ENCODE measurements at regions of chr9 and their contacts with region 1.

Region 1: DNA sequence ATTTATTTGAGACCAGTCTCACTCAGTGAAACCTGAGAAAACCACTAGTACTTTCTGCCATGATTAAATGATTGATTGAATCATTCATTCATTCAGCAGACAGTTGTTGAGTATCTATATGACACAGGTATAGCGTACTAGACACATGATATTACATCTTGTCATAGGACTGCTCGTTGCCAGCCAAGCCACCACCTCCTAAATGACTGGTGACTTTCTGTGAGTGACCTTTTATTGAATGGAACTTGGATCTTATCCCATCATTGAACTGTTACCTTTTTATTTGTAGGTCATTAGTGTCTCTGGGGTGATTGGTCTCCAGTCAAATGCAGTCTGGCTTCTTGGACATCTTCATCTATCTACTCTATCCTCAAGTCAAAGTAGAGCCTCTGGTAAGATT is 80.7 kb downstream of the HACD4 start:
- DNase-seq: no peak
- ATAC-seq: no peak
- H3K4me3 ChIP-seq: no peak overlapping the region
- H3K4me3 Mint-ChIP-seq: no peak overlapping the region
- H3K27ac ChIP-seq: no peak overlapping the region
- H3K27ac Mint-ChIP-seq: no peak overlapping the region
- H3K4me1 ChIP-seq: no peaks in the 10 kb centered on the region
- H3K4me1 Mint-ChIP-seq: peaks cover 2% of the 10 kb centered on the region
- H3K27me3 ChIP-seq: no peaks in the 10 kb centered on the region
- H3K27me3 Mint-ChIP-seq: no peaks in the 10 kb centered on the region
- CTCF ChIP-seq: no peak

Region 2: DNA sequence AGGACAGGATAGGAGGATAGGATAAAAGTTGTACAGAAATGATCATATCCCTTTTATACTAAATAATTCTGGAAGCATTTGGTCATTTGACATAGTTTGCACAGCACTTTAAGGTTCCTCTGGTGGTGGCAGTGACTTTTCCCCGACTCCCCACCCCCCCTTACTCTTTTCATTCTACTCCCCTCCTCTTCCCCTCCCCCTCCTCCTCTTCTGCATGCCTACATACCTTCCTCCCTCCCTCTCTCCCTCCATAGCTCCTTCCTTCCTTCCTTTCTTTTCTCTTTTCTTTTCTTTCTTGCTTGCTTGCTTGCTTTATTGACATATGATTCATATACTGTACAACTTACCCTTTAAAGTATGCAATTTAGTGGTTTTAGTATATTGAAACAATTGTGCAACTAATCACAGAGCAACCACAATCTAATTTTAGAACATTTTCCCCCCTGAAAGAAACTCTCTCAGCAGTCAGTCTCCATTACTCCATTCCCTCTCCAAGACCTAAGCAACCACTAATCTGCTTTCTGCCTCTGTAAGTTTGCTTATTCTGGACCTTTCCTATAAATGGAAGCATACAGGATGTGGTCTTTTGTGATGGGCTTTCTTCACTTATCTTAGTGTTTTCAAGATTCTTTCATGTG is 78.2 kb before region 1 on chr9:
- CTCF ChIA-PET with region 1: no interaction called
- POLR2A ChIA-PET with region 1: no interaction called
- intact Hi-C with region 1: no loop called
- DNase-seq: no peak
- ATAC-seq: no peak
- H3K4me3 ChIP-seq: no peak overlapping the region
- H3K4me3 Mint-ChIP-seq: no peak overlapping the region
- H3K27ac ChIP-seq: no peak overlapping the region
- H3K27ac Mint-ChIP-seq: no peak overlapping the region
- H3K4me1 ChIP-seq: peaks cover 7 to 16% of the 10 kb centered on the region in 2 donors
- H3K4me1 Mint-ChIP-seq: peaks cover 14% of the 10 kb centered on the region
- H3K27me3 ChIP-seq: no peaks in the 10 kb centered on the region
- H3K27me3 Mint-ChIP-seq: no peaks in the 10 kb centered on the region
- CTCF ChIP-seq: no peak

Region 3: GRCh38 chr9:21016701-21017491 is 66.2 kb after region 1 on chr9:
- CTCF ChIA-PET with region 1: no interaction called
- POLR2A ChIA-PET with region 1: no interaction called
- intact Hi-C with region 1: loop called (anchors 10 kb)
- DNase-seq: no peak
- ATAC-seq: no peak
- H3K4me3 ChIP-seq: no peak overlapping the region
- H3K4me3 Mint-ChIP-seq: no peak overlapping the region
- H3K27ac ChIP-seq: no peak overlapping the region
- H3K27ac Mint-ChIP-seq: no peak overlapping the region
- H3K4me1 ChIP-seq: peaks cover 0 to 7% of the 10 kb centered on the region in 2 donors
- H3K4me1 Mint-ChIP-seq: peaks cover 18% of the 10 kb centered on the region
- H3K27me3 ChIP-seq: no peaks in the 10 kb centered on the region
- H3K27me3 Mint-ChIP-seq: no peaks in the 10 kb centered on the region
- CTCF ChIP-seq: no peak

Measured in B cell (primary cell).